Activated CD4-positive, alpha-beta memory T cell treated with anti-CD3 and anti-CD28 coated beads, Interleukin-2, amount 10 ng/mL, durations not matched to agents 7 days and 5 days (primary cell): ENCODE measurements at regions of chr12 and their contacts with region 1.

Region 1: DNA sequence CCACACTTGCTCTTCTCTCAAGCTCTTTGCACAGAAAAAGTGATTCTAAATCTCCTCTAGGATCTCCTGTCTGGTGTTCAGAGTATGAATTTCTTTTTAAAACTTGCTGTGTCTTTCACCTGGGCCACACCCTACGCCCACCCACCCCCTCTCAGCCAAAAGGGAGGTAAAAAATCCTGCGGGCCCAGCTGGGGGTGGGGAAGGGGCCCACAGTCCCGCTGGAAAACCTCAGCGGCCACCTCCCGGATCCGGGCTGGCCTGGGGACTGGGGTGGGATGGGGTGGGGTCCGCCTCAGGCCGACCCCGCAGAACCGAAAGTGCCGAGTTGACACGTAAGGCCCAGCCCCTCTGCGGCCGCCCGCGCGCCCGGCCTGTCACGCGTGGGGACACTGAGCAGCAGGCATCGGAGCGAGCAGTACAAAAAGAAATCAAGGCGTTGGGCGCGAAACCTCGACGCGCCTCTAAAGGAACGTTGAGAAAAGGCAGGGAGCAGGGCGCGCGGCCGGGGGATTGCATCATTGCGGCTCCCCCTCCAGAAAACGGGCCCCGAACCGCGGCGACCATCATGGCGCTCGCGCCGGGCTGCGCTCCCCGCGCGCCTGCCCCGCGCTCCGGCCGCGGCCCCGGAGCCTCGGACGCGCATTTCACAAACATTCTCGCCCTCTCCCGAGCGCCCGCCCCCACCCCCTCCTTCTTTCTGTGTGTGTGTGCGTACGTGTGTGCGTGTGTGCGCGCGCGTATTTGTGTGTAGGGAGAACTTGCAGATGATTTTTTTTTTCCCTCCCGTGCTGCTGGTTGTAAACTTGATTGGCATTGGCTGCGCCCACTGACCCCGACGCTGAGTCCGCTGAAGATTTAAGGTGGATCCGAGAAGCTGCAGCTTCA is 7.7 kb downstream of the CDKN1B start:
- DNase-seq: peak; percentile 92
- H3K4me3 Mint-ChIP-seq: peak overlapping the region; percentile 94
- H3K27ac Mint-ChIP-seq: peak overlapping the region; percentile 96
- H3K4me1 Mint-ChIP-seq: peaks cover 33% of the 10 kb centered on the region
- H3K27me3 Mint-ChIP-seq: no peaks in the 10 kb centered on the region

Region 2: DNA sequence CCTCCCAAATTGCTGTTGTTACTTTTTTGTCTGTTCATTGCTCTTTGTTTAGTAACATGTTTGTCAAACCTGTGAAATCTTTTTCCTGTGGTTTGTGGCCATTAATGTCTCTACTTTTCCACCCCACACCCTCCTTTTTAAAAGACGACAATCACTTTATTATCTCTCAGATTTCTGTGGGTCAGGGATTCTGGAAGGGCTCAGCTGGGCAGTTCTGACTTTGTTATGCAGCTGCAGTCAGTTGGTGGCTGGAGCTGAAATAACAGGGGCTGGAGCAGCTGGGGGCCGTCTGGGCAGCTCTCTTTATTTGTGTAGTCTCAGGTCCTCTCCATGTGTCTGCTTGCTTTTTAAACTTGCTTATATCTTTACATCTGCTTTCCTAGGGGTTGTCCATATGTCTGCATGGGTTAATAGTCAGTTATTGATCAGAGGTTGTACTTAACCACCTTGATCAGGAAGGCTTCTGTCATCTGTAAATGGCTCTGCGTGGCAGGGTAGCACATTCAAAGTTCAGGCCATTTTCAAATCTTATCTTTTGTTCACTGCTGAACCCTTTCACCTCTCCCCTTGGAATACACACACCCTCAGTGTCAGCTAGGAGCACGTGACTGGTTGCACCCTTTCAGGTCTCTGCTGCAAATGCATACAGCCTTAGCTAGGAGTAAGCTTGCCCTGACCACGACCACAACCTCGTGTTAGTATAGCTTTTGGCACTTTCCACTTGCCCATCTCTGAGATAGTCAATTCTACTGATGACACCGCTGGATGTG is 340.1 kb before region 1 on chr12:
- CTCF ChIA-PET with region 1: no interaction called
- POLR2A ChIA-PET with region 1: interaction called, 152 read pairs
- DNase-seq: peak; percentile 85
- H3K4me3 Mint-ChIP-seq: peak overlapping the region; percentile 57
- H3K27ac Mint-ChIP-seq: peak overlapping the region; percentile 97
- H3K4me1 Mint-ChIP-seq: peaks cover 83% of the 10 kb centered on the region
- H3K27me3 Mint-ChIP-seq: no peaks in the 10 kb centered on the region

Region 3: GRCh38 chr12:12456637-12457036 is 268.3 kb before region 1 on chr12:
- CTCF ChIA-PET with region 1: no interaction called
- POLR2A ChIA-PET with region 1: interaction called, 13 read pairs
- DNase-seq: no peak
- H3K4me3 Mint-ChIP-seq: peak overlapping the region; percentile 46
- H3K27ac Mint-ChIP-seq: peak overlapping the region; percentile 84
- H3K4me1 Mint-ChIP-seq: peaks cover 61% of the 10 kb centered on the region
- H3K27me3 Mint-ChIP-seq: no peaks in the 10 kb centered on the region

Region 4: GRCh38 chr12:12474931-12475795 is 249.7 kb before region 1 on chr12:
- CTCF ChIA-PET with region 1: no interaction called
- POLR2A ChIA-PET with region 1: interaction called, 580 read pairs
- DNase-seq: peak; percentile 74
- H3K4me3 Mint-ChIP-seq: peak overlapping the region; percentile 67
- H3K27ac Mint-ChIP-seq: peak overlapping the region; percentile 100
- H3K4me1 Mint-ChIP-seq: peaks cover 86% of the 10 kb centered on the region
- H3K27me3 Mint-ChIP-seq: no peaks in the 10 kb centered on the region

Region 5: GRCh38 chr12:12696562-12697383 is 28.1 kb before region 1 on chr12:
- CTCF ChIA-PET with region 1: interaction called, 5 read pairs
- POLR2A ChIA-PET with region 1: interaction called, 886 read pairs
- DNase-seq: peak; percentile 93
- H3K4me3 Mint-ChIP-seq: peak overlapping the region; percentile 83
- H3K27ac Mint-ChIP-seq: peak overlapping the region; percentile 100
- H3K4me1 Mint-ChIP-seq: peaks cover 63% of the 10 kb centered on the region
- H3K27me3 Mint-ChIP-seq: no peaks in the 10 kb centered on the region

Region 6: DNA sequence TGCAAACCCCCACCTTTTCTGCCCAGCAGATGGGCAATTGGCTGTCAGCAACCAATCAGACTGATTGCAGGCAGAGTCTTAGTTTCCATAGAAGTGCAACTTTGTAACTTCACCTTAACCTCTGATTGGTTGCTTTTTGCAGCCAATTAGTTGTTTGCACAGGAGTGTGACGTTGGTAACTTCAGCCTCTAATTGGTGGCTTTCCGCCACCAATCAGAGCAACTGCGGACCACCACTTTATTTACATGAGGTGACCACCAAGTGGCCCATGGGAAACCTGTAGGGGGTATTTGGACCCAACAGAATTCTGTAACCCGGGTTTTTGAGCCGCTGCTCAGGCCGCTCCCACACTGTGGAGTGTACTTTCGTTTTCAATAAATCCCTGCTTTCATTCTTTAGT is 24.5 kb after region 1 on chr12:
- CTCF ChIA-PET with region 1: no interaction called
- POLR2A ChIA-PET with region 1: no interaction called
- DNase-seq: no peak
- H3K4me3 Mint-ChIP-seq: no peak overlapping the region
- H3K27ac Mint-ChIP-seq: no peak overlapping the region
- H3K4me1 Mint-ChIP-seq: peaks cover 6% of the 10 kb centered on the region
- H3K27me3 Mint-ChIP-seq: no peaks in the 10 kb centered on the region